ENCODE measurements at regions of chr14 and their contacts with region 1.

Region 1: GRCh38 chr14:24058260-24058950 is 6.6 kb downstream of the CARMIL3 start:
- H3K4me3 ChIP-seq: no peak overlapping the region
- H3K27ac ChIP-seq: no peak overlapping the region
- H3K4me1 ChIP-seq: no peaks in the 10 kb centered on the region
- CTCF ChIP-seq: peak; percentile 85

Region 2: DNA sequence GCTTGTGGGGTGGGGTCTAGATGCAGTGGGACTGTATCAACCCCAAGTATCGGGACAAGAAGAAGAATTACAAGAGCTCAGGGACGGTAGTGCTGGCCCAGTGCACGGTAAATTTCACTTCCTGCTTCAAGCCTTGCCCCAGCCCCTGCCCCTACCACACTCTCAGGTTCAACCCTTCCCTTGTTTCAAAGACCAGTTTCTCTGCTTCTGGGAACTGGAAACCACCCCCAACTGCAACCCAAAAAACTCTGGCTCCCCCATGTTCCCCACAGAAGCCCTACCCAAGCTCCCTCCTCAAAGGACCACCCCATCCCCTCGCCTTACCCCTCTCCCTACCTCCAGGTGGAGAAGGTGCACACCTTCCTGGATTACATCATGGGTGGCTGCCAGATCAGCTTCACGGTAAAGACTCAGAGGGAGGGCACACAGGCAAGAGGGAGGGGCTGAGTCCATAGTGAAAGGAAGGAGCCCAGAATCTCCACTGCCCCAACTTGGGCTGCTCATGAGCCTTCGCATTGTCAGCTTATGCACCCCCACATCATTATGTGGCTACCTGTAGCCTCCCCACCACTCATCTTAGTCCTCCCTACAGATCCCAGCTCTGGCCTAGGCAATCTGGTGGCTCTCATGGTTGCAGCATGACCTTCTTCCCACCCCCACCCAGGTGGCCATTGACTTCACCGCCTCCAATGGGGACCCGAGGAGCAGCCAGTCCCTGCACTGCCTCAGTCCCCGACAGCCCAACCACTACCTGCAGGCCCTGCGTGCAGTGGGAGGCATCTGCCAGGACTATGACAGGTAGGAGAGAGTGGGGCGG is 17.3 kb after region 1 on chr14:
- CTCF ChIA-PET with region 1: interaction called, 24 read pairs
- POLR2A ChIA-PET with region 1: interaction called, 7 read pairs
- H3K4me3 ChIP-seq: no peak overlapping the region
- H3K27ac ChIP-seq: no peak overlapping the region
- H3K4me1 ChIP-seq: peaks cover 5% of the 10 kb centered on the region; the same call in 1 of the 2 replicates
- CTCF ChIP-seq: no peak

Region 3: GRCh38 chr14:24080888-24081738 is 22.7 kb after region 1 on chr14:
- CTCF ChIA-PET with region 1: interaction called, 24 read pairs
- POLR2A ChIA-PET with region 1: interaction called, 7 read pairs
- H3K4me3 ChIP-seq: peak overlapping the region; percentile 58
- H3K27ac ChIP-seq: peak overlapping the region; percentile 47; the same call in 1 of the 2 replicates
- H3K4me1 ChIP-seq: peaks cover 10% of the 10 kb centered on the region
- CTCF ChIP-seq: no peak

Region 4: GRCh38 chr14:24086193-24086955 is 28.0 kb after region 1 on chr14:
- CTCF ChIA-PET with region 1: interaction called, 247 read pairs
- POLR2A ChIA-PET with region 1: interaction called, 17 read pairs
- H3K4me3 ChIP-seq: no peak overlapping the region
- H3K27ac ChIP-seq: no peak overlapping the region
- H3K4me1 ChIP-seq: peaks cover 3% of the 10 kb centered on the region; the same call in 1 of the 2 replicates
- CTCF ChIP-seq: no peak

Region 5: GRCh38 chr14:24108336-24108874 is 50.0 kb after region 1 on chr14:
- CTCF ChIA-PET with region 1: interaction called, 163 read pairs
- POLR2A ChIA-PET with region 1: interaction called, 17 read pairs
- H3K4me3 ChIP-seq: no peak overlapping the region
- H3K27ac ChIP-seq: no peak overlapping the region
- H3K4me1 ChIP-seq: no peaks in the 10 kb centered on the region
- CTCF ChIP-seq: no peak

Region 6: GRCh38 chr14:24114536-24115450 is 56.4 kb after region 1 on chr14 and contains the starts of genes DCAF11 and NRL:
- CTCF ChIA-PET with region 1: interaction called, 163 read pairs
- POLR2A ChIA-PET with region 1: interaction called, 5 read pairs
- H3K4me3 ChIP-seq: peak within 1 kb of the TSS; percentile 98
- H3K27ac ChIP-seq: peak within 1 kb of the TSS; percentile 94
- H3K4me1 ChIP-seq: no peaks in the 10 kb centered on the region
- CTCF ChIP-seq: no peak

Region 7: DNA sequence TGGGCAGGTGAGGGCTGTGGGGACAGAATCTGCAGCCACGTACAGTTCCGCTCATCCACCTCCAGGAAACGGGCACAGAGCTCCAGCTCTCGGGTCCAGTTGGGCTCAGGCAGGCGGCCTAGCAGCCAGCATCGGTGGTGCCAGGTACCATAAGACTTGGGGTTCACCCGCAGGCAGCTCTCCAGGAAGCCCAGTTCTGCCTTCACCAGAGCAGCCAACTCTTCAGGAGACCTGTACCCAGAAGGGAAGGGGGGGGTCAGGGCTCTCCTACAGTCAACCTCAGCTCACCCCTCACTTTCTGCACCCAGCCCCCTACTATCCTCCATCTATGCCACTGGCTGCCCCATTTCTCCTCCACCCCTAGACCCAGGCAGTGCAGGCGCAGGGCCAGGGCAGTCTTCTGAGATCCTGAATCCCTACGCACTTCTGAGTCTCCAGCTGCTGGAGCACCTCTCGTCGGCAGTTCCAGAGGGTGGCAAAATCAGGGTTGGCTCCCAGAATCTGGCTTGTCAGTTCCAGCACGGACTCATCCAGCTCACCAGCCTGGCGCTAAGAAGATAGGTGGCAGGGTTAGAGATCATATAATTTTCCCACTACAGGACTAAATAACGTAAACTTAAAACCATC is 211.6 kb after region 1 on chr14:
- CTCF ChIA-PET with region 1: no interaction called
- POLR2A ChIA-PET with region 1: no interaction called
- H3K4me3 ChIP-seq: no peak overlapping the region
- H3K27ac ChIP-seq: no peak overlapping the region
- H3K4me1 ChIP-seq: peaks cover 3% of the 10 kb centered on the region; the same call in 1 of the 2 replicates
- CTCF ChIP-seq: no peak

Region 8: DNA sequence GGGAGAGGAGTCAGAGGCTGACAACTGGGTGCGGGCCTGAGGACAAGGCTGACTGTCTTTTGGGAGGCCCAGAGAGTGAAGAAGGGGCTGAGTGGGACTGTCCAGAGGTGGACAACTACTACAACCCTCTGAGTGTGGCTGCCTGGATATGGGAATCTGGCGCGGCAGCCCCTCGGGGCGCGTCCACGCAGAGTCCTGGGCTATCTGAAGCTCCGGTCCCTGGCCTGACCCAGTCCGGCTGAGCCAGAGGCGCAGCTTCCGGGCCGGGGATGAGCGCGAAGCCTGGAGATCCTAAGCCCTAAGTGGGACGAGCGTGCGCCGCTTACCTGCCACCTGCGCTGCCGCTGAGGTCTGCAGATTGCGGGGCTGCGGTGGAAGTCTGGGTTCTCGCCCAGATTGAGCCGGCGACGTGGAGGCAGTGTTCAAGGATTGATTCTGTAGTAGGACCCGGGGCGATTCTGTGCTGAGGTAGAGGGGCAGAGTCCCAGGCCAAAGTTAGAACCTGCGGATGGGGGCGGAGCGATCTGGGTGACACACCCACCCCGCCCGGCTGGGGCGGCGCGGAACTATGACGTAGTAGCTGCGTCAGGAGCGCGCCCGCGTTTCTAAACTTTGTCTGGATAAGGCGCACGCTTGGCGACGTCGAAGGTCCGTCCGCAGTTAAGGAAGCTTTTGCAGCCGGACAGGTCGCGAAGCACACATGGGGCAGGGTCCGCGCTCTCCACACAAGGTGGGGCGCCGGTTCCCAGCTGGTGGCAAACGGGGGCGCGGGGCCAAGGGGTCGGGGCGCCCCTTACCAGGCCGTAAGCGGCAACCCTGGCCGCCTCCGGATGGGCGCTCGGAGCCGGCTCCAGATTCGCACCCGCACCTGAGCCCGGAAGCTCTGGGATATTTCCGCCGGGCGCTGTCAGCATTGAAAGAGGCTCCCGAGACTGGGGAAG is 241.1 kb after region 1 on chr14 and contains the starts of genes DHRS1 and NOP9:
- CTCF ChIA-PET with region 1: interaction called, 11 read pairs
- POLR2A ChIA-PET with region 1: no interaction called
- H3K4me3 ChIP-seq: peak within 1 kb of the TSS; percentile 85
- H3K27ac ChIP-seq: peak within 1 kb of the TSS; percentile 71
- H3K4me1 ChIP-seq: peaks cover 12% of the 10 kb centered on the region
- CTCF ChIP-seq: no peak

Measured in HEK293 (cell line).